B cell (primary cell): ENCODE measurements at regions of chr9 and their contacts with region 1.

Region 1: DNA sequence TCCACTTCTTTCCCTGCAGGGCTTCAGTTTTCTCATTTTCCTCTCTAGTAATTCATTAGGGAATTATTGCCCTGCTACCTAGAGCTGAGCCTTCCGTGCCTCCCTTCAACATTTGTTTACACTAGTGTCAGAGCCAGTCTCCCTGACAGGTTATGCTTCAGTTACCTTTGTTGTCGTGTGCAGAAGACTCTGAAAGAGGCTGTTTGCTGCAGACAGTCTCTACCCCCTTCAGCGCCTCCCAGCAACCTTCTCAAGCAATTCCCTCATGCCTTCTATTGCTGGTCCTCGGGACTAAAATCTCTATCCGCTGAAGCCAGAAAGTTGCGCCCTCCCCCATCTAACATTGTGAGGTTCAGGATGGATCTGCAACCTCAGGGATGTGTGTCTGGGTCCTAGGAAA is 12.8 kb downstream of the RALGPS1 start:
- DNase-seq: no peak
- ATAC-seq: no peak
- H3K4me3 ChIP-seq: no peak overlapping the region
- H3K4me3 Mint-ChIP-seq: no peak overlapping the region
- H3K27ac ChIP-seq: no peak overlapping the region
- H3K27ac Mint-ChIP-seq: no peak overlapping the region
- H3K4me1 ChIP-seq: no peaks in the 10 kb centered on the region
- H3K4me1 Mint-ChIP-seq: no peaks in the 10 kb centered on the region
- H3K27me3 ChIP-seq: no peaks in the 10 kb centered on the region
- H3K27me3 Mint-ChIP-seq: no peaks in the 10 kb centered on the region
- CTCF ChIP-seq: no peak

Region 2: DNA sequence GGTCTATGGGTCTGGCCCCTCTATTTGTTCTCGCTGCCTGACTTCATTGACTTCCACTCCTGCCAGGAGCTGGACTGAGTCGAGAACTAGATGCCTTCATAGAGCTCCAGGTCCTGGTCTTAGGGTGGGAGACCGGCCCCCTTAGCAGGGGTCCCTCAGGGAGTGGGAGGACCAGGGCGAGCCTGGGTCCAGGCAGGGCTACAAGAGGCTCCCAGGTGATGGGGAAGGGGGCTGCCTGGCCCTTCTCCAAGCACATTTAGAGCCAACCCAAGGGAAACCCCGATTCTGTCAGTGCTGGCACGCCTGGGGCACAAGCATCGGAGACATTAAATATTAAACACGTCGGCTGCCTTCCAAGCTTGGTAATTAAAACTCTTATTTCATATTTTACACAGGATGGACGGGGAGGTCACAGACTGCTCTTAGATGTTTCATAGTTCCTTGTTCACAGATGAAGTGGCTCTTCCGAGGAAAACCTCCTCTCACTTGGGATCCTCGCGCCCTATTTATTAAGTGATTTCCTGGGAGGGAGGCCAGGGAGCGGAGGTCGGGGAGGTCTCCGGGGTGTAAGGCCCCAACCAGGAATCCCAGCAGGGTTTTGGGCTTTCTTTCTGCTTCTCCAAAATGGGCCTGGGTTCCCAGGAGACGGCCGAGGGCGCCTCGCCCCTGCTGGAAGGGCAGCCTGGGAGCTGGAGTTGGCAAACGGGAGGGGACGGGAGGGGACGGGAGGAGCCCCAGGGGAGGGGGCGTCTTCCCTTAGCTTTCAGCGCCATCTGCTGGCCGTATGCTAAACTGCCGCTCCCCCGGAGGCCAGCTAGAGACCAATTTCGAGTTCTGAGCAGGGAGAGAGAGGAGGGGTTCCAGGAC is 146.0 kb before region 1 on chr9:
- CTCF ChIA-PET with region 1: no interaction called
- POLR2A ChIA-PET with region 1: no interaction called
- intact Hi-C with region 1: no loop called
- DNase-seq: peak; percentile 83
- ATAC-seq: peak; percentile 86
- H3K4me3 ChIP-seq: no peak overlapping the region
- H3K4me3 Mint-ChIP-seq: no peak overlapping the region
- H3K27ac ChIP-seq: no peak overlapping the region
- H3K27ac Mint-ChIP-seq: no peak overlapping the region
- H3K4me1 ChIP-seq: peaks cover 0 to 3% of the 10 kb centered on the region in 2 donors
- H3K4me1 Mint-ChIP-seq: no peaks in the 10 kb centered on the region
- H3K27me3 ChIP-seq: peaks cover 0 to 8% (median 4%) of the 10 kb centered on the region in 4 experiments
- H3K27me3 Mint-ChIP-seq: peaks cover 24% of the 10 kb centered on the region
- CTCF ChIP-seq: peak; percentile 98

Region 3: DNA sequence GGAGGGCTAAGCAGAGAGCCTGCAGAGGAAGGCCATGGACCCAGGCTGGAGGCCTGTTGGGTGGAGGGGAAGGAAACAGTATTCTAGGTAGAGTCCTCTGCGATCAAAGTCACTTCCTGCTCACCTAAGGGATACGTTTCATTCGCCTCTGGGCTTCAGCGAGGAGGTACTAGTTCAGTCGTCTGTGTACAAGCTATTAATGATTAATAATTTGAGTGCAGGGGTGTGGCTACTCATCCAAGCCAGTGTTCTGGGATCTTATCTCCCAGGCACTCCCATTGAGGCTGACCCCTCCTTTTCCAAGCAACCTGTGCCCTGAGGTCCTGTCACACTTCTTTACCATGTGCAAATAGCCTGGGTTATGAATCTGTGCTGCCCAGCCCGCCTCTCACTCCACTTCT is 12.4 kb after region 1 on chr9:
- CTCF ChIA-PET with region 1: interaction called, 16 read pairs
- POLR2A ChIA-PET with region 1: no interaction called
- intact Hi-C with region 1: no loop called
- DNase-seq: no peak
- ATAC-seq: no peak
- H3K4me3 ChIP-seq: no peak overlapping the region
- H3K4me3 Mint-ChIP-seq: no peak overlapping the region
- H3K27ac ChIP-seq: no peak overlapping the region
- H3K27ac Mint-ChIP-seq: no peak overlapping the region
- H3K4me1 ChIP-seq: no peaks in the 10 kb centered on the region
- H3K4me1 Mint-ChIP-seq: peaks cover 5% of the 10 kb centered on the region
- H3K27me3 ChIP-seq: no peaks in the 10 kb centered on the region
- H3K27me3 Mint-ChIP-seq: no peaks in the 10 kb centered on the region
- CTCF ChIP-seq: no peak

Region 4: DNA sequence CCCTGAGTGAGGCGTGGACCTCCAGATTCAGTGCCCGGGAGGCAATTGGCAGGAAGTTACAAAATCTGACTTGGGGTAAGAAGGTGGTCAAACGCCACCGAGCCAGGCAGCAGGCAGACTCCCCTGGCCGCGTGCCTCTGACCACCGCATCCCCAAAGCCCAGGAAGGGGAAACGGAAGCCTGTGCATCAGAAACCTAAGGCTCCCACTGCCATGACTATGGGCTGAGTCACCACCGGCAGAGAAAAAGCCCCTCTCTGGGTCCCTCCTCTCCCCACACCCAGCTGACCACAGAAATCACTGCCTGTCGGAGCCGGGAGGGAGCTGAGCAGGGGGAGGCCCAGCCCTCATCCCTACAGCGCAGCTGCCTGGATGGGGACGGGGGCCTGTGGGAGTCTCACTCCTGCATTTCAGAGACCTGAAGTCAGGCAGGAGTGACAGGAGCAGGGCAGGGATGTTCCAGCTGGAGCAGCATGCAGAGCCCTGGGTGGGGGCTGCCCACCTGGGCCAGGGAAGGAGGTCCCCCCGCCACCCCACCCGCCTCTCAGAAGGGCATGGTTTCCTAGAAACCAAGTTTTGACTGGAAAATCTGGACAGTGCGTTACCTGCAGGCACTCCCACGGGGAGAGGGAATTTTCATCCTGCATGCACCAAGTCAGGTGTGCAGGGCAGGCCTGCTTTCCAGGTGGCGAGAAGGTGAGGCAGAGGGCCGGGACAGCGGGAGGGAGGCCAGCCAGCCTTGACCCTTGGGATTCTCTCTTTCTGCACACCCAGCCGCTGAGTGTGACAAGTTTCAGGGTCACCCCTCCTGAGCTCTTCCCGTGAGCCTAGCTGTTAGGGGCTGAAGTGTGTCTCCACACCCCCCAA is 592.1 kb after region 1 on chr9:
- CTCF ChIA-PET with region 1: no interaction called
- POLR2A ChIA-PET with region 1: interaction called, 10 read pairs
- intact Hi-C with region 1: no loop called
- DNase-seq: no peak
- ATAC-seq: no peak
- H3K4me3 ChIP-seq: no peak overlapping the region
- H3K4me3 Mint-ChIP-seq: no peak overlapping the region
- H3K27ac ChIP-seq: no peak overlapping the region
- H3K27ac Mint-ChIP-seq: no peak overlapping the region
- H3K4me1 ChIP-seq: no peaks in the 10 kb centered on the region
- H3K4me1 Mint-ChIP-seq: peaks cover 3% of the 10 kb centered on the region
- H3K27me3 ChIP-seq: no peaks in the 10 kb centered on the region
- H3K27me3 Mint-ChIP-seq: no peaks in the 10 kb centered on the region
- CTCF ChIP-seq: no peak